OCI-LY7 (cell line): ENCODE measurements at regions of chr1 and their contacts with region 1.

Region 1: GRCh38 chr1:100077531-100077930 is 55.2 kb downstream of the SASS6 start:
- DNase-seq: no peak
- H3K4me3 ChIP-seq: no peak overlapping the region
- H3K27ac ChIP-seq: no peak overlapping the region
- H3K4me1 ChIP-seq: no peaks in the 10 kb centered on the region
- CTCF ChIP-seq: no peak

Region 2: GRCh38 chr1:100100202-100100601 is 22.7 kb after region 1 on chr1:
- CTCF ChIA-PET with region 1: no interaction called
- POLR2A ChIA-PET with region 1: interaction called, 18 read pairs
- intact Hi-C with region 1: no loop called
- DNase-seq: no peak
- H3K4me3 ChIP-seq: no peak overlapping the region
- H3K27ac ChIP-seq: no peak overlapping the region
- H3K4me1 ChIP-seq: no peaks in the 10 kb centered on the region
- CTCF ChIP-seq: no peak